Activated CD4-positive, alpha-beta memory T cell treated with anti-CD3 and anti-CD28 coated beads for 36 hours (primary cell): ENCODE measurements at regions of chr3 and their contacts with region 1.

Region 1: GRCh38 chr3:51371943-51372557 is 13.0 kb upstream of the MANF start:
- DNase-seq: peak; percentile 63
- H3K4me3 Mint-ChIP-seq: no peak overlapping the region
- H3K27ac Mint-ChIP-seq: no peak overlapping the region
- H3K4me1 Mint-ChIP-seq: no peaks in the 10 kb centered on the region
- H3K27me3 Mint-ChIP-seq: peaks cover 4% of the 10 kb centered on the region

Region 2: GRCh38 chr3:50674349-50675178 is 697.5 kb before region 1 on chr3 and contains the start of gene DOCK3:
- CTCF ChIA-PET with region 1: interaction called, 4 read pairs
- POLR2A ChIA-PET with region 1: no interaction called
- intact Hi-C with region 1: loop called (anchors 5 kb)
- DNase-seq: peak; percentile 65
- H3K4me3 Mint-ChIP-seq: peak within 1 kb of the TSS; percentile 68
- H3K27ac Mint-ChIP-seq: peak within 1 kb of the TSS; percentile 28
- H3K4me1 Mint-ChIP-seq: peaks cover 11% of the 10 kb centered on the region
- H3K27me3 Mint-ChIP-seq: peaks cover 25% of the 10 kb centered on the region
- total RNA-seq, gene DOCK3: 2.7 to 2.9 TPM

Region 3: DNA sequence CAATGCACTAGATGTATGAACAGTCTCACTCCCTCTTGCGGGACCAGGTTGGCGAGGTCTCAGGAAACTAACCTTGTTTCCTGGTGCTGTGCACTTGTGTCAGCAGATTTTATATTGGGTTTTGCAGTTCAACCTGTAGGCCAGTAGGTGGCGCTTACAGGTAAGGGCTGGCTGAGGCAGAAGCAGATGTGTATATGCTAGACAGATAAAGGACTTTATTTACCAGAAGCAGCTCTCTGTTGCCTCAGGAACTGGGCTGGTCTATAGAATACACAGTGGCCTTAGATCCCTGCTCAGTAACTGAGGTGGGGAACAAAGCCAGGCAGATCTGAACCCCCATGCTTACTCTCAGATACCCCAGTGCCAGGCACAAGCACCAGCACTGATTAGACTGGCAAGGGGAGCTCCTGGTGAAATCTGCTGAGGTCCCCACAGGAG is 400.5 kb before region 1 on chr3:
- CTCF ChIA-PET with region 1: interaction called, 34 read pairs
- POLR2A ChIA-PET with region 1: no interaction called
- intact Hi-C with region 1: loop called (anchors 2 kb)
- DNase-seq: peak; percentile 61
- H3K4me3 Mint-ChIP-seq: no peak overlapping the region
- H3K27ac Mint-ChIP-seq: no peak overlapping the region
- H3K4me1 Mint-ChIP-seq: peaks cover 12% of the 10 kb centered on the region
- H3K27me3 Mint-ChIP-seq: no peaks in the 10 kb centered on the region

Region 4: GRCh38 chr3:51099794-51100535 is 272.1 kb before region 1 on chr3:
- CTCF ChIA-PET with region 1: interaction called, 10 read pairs
- POLR2A ChIA-PET with region 1: no interaction called
- intact Hi-C with region 1: loop called (anchors 10 kb)
- DNase-seq: peak; percentile 34
- H3K4me3 Mint-ChIP-seq: no peak overlapping the region
- H3K27ac Mint-ChIP-seq: no peak overlapping the region
- H3K4me1 Mint-ChIP-seq: peaks cover 5% of the 10 kb centered on the region
- H3K27me3 Mint-ChIP-seq: no peaks in the 10 kb centered on the region

Region 5: GRCh38 chr3:51163051-51163450 is 209.0 kb before region 1 on chr3:
- CTCF ChIA-PET with region 1: no interaction called
- POLR2A ChIA-PET with region 1: no interaction called
- intact Hi-C with region 1: no loop called
- DNase-seq: no peak
- H3K4me3 Mint-ChIP-seq: no peak overlapping the region
- H3K27ac Mint-ChIP-seq: no peak overlapping the region
- H3K4me1 Mint-ChIP-seq: no peaks in the 10 kb centered on the region
- H3K27me3 Mint-ChIP-seq: no peaks in the 10 kb centered on the region